Heart right ventricle (tissue), 16 donors: ENCODE measurements at regions of chr20 and their contacts with region 1.

Region 1: DNA sequence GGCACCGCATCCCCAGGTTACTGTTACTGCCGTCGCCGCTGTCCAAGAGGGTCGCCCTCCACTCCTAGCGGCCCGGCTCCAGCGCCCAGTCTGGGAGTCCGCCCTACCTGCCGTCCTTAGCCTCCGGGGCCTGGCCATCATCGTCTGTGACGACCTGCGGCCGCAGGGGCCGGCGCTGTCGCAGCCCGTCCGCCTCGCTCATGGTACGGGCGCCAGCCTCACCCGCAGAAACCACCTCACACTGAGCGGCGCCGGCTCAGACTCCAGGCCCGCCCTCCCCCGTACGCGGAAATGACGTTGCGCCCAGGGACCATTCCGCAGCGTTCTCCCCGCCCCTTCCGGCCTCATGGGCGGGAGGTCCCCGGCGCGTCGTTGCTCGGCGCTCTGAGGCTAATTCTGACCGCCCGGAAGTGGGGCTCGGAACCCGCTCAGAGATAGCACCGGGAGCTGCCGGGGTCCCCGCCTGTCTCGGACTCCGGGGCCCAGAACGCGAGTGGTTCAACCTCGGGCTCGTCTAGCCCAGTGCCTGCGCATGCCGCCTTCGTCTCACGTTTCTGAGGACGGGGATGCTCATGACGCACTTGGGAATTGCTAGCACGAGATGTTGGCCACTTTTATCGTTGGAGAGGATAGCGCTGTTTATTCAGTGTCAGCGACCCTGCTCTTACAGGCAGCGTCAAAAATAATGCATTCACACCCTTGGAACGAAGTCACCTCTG is at the start of gene APMAP:
- DNase-seq: peak; percentile 96 to 97
- ATAC-seq: peak; percentile 95 to 97 (median 96)
- H3K4me3 ChIP-seq: peak within 1 kb of the TSS; percentile 53 to 96 (median 87)
- H3K27ac ChIP-seq: peak within 1 kb of the TSS; percentile 71 to 96 (median 93)
- H3K4me1 ChIP-seq: peaks cover 5 to 78% (median 49%) of the 10 kb centered on the region in 9 donors
- H3K27me3 ChIP-seq: no peaks in the 10 kb centered on the region
- CTCF ChIP-seq: no peak
- total RNA-seq, gene APMAP: 22.5 to 44.6 (median 33.1) TPM

Region 2: GRCh38 chr20:24872291-24873024 is 120.2 kb before region 1 on chr20:
- intact Hi-C with region 1: no loop called
- DNase-seq: no peak
- ATAC-seq: peak in 1 of 8 donors; percentile 28
- H3K4me3 ChIP-seq: no peak overlapping the region
- H3K27ac ChIP-seq: no peak overlapping the region
- H3K4me1 ChIP-seq: no peaks in the 10 kb centered on the region
- H3K27me3 ChIP-seq: peaks cover 0 to 16% (median 11%) of the 10 kb centered on the region in 7 donors
- CTCF ChIP-seq: no peak

Region 3: GRCh38 chr20:24934101-24934661 is 58.5 kb before region 1 on chr20:
- intact Hi-C with region 1: no loop called
- DNase-seq: no peak
- ATAC-seq: no peak
- H3K4me3 ChIP-seq: no peak overlapping the region
- H3K27ac ChIP-seq: no peak overlapping the region
- H3K4me1 ChIP-seq: peaks cover 0 to 21% (median 0%) of the 10 kb centered on the region in 9 donors
- H3K27me3 ChIP-seq: no peaks in the 10 kb centered on the region
- CTCF ChIP-seq: no peak

Region 4: GRCh38 chr20:25065625-25066338 is 73.1 kb after region 1 on chr20:
- intact Hi-C with region 1: loop called (anchors 1 to 2 kb)
- DNase-seq: peak; percentile 37 to 60
- ATAC-seq: peak; percentile 53 to 92 (median 79)
- H3K4me3 ChIP-seq: no peak overlapping the region
- H3K27ac ChIP-seq: peak overlapping the region in 1 of 10 donors; percentile 1
- H3K4me1 ChIP-seq: peaks cover 0 to 20% (median 11%) of the 10 kb centered on the region in 9 donors
- H3K27me3 ChIP-seq: peaks cover 0 to 36% (median 10%) of the 10 kb centered on the region in 7 donors
- CTCF ChIP-seq: peak; percentile 69 to 94 (median 81)

Region 5: DNA sequence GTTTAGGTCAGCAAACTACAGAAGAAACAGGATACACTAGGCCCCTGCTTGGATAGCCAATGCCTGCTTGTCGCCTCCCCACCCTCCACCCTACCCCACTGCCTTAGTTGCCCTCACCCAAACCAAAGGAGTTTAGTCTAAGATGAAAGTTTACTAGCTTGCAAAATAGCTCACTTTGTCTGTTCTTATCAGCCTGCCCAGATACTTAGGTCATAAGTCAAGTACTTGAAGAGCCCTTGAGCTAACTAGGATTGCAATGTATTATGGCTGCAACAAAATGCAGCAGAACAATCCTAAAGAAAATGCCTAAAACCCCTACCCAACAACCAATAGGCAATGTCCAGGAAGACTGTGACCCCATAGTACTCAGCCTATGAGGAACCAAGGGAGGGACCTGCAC is 195.6 kb after region 1 on chr20:
- intact Hi-C with region 1: loop called in 4 of 10 experiments (anchors 5 kb)
- DNase-seq: no peak
- ATAC-seq: no peak
- H3K4me3 ChIP-seq: no peak overlapping the region
- H3K27ac ChIP-seq: no peak overlapping the region
- H3K4me1 ChIP-seq: peaks cover 0 to 24% (median 8%) of the 10 kb centered on the region in 9 donors
- H3K27me3 ChIP-seq: peaks cover 0 to 8% (median 0%) of the 10 kb centered on the region in 7 donors
- CTCF ChIP-seq: no peak

Region 6: DNA sequence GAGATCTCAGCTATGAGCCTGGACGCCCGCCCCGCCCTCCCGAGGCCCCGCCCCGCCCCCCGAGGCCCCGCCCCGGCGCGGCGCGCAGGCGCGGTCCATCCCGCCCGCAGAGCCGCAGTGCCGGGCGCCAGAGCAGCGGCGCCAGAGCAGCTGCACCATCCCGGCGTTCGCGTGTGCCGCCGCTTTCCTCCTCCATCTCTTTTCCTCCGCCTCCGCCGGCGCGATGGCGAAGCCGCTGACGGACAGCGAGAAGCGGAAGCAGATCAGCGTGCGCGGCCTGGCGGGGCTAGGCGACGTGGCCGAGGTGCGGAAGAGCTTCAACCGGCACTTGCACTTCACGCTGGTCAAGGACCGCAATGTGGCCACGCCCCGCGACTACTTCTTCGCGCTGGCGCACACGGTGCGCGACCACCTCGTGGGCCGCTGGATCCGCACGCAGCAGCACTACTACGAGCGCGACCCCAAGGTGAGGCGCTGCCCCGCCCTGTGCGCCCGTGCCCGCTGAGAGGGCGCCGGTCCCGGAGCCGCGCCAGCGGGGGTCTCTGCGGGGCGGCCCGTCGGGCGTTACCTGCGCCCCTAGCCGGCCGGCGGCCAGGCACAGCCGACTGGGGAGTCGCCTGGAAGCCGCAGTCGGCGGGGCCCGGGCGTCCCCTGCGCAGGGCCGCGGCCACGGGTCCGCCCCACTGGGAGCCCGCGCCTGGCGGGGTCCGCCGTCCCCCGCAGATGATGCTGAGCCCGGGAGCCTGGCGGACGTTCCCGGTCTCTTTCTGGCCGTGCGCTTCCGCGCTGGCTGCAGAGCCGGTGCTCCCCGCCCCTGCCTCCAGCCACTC is 255.5 kb after region 1 on chr20 and contains the start of gene PYGB:
- intact Hi-C with region 1: loop called in 2 of 10 experiments (anchors 5 to 10 kb)
- DNase-seq: peak; percentile 71 to 79
- ATAC-seq: peak; percentile 66 to 94 (median 87)
- H3K4me3 ChIP-seq: peak within 1 kb of the TSS; percentile 76 to 96 (median 93)
- H3K27ac ChIP-seq: peak within 1 kb of the TSS; percentile 92 to 98 (median 96)
- H3K4me1 ChIP-seq: peaks cover 0 to 61% (median 39%) of the 10 kb centered on the region in 9 donors
- H3K27me3 ChIP-seq: no peaks in the 10 kb centered on the region
- CTCF ChIP-seq: no peak
- total RNA-seq, gene PYGB: 203 to 462 (median 276) TPM

Region 7: DNA sequence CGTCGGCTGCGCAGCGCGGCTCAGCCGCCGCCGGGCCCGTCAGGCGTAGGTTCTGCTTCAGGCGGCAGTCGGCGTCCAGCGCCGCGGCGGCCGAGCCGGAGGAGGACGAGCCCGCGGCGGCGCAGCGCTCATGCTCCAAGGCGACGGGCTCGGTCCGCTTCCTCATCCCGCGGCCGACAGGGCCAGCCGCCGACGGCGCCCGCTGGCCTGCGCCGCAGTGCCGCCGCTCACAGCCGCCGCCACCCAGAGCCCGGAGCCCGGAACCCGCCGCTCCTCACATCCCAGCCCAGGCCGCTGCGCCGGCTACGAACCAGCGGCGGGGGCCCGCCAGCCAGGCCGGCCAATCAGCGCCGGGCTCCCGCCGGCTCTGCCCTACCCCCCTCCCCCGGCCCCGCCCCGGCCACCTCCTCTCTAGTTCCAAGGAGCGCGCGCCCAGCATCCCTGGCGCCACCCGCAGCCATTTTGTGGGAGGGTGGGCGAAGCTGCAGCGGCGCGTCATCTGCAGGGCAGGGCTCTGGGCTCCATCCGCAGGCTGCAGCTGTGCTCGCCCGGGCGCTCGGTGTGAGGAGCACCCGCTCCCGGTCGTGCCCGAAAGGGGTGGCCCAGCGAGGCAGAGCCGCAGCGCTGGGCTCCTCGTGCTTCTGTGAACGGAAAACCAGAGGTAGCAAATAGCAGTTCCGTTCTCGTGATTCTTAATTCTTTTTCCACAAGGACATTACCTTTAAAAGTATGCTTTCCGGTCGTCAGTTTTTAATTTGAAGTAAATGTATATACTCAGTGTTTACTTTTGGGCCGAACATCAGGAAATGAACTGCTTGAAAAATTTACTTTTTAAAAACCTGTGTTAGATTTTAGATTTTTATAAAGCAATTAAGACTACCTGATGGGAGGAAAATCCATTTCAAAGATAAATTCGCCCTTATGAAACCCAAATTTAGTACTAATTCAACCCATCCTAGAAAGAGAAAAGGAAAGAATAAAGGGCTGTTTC is 398.2 kb after region 1 on chr20 and contains the start of gene ABHD12:
- intact Hi-C with region 1: loop called in 8 of 10 experiments (anchors 5 to 10 kb)
- DNase-seq: peak; percentile 96 to 97
- ATAC-seq: peak; percentile 98 to 100 (median 99)
- H3K4me3 ChIP-seq: peak within 1 kb of the TSS; percentile 61 to 99 (median 91)
- H3K27ac ChIP-seq: peak within 1 kb of the TSS; percentile 31 to 94 (median 88)
- H3K4me1 ChIP-seq: peaks cover 0 to 20% (median 18%) of the 10 kb centered on the region in 9 donors
- H3K27me3 ChIP-seq: no peaks in the 10 kb centered on the region
- CTCF ChIP-seq: peak in 3 of 9 donors; percentile 12 to 28 (median 15)
- total RNA-seq, gene ABHD12: 21.1 to 41.3 (median 26.9) TPM